ENCODE measurements at regions of chr6 and their contacts with region 1.

Region 1: GRCh38 chr6:132715204-132715603 is 1.3 kb upstream of the VNN1 start:
- DNase-seq: peak; percentile 84
- H3K4me3 Mint-ChIP-seq: no peak overlapping the region
- H3K27ac Mint-ChIP-seq: no peak overlapping the region
- H3K4me1 Mint-ChIP-seq: peaks cover 11% of the 10 kb centered on the region
- H3K27me3 Mint-ChIP-seq: no peaks in the 10 kb centered on the region
- CTCF ChIP-seq: peak; percentile 51

Region 2: DNA sequence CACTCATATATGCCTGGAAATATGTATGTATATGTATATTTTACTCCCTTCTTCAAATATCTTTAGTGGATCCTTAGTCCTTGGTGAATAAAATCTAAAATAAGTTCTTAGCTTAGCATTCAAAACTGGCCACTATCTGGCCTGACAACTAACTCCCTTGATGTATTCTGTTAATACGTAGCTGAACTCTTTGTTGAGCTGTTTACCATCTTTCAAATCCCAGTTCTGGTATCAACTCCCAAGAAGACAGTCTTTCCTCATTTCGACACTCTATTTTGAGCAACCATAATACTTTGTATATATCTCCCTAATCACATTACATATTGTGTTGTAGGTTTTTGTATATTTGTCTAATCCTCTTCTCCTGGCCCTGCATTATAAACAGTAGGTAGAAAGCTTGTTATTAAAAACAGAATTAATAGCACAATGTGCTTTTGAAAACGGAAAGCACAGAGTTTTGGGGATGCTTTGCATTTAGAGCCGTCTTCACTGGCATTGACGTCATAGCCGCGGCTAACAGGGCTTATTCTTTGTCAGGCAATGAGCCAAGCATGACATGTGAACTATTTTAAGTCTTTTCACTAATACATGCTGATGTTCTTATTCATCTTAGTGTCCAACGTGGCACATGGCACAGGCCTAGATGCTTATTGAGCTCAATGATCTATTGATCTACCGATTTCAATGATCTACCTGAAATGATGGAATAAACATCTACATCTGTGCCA is 716.8 kb before region 1 on chr6:
- CTCF ChIA-PET with region 1: no interaction called
- POLR2A ChIA-PET with region 1: no interaction called
- intact Hi-C with region 1: no loop called
- DNase-seq: no peak
- H3K4me3 Mint-ChIP-seq: no peak overlapping the region
- H3K27ac Mint-ChIP-seq: no peak overlapping the region
- H3K4me1 Mint-ChIP-seq: no peaks in the 10 kb centered on the region
- H3K27me3 Mint-ChIP-seq: no peaks in the 10 kb centered on the region
- CTCF ChIP-seq: no peak

Region 3: DNA sequence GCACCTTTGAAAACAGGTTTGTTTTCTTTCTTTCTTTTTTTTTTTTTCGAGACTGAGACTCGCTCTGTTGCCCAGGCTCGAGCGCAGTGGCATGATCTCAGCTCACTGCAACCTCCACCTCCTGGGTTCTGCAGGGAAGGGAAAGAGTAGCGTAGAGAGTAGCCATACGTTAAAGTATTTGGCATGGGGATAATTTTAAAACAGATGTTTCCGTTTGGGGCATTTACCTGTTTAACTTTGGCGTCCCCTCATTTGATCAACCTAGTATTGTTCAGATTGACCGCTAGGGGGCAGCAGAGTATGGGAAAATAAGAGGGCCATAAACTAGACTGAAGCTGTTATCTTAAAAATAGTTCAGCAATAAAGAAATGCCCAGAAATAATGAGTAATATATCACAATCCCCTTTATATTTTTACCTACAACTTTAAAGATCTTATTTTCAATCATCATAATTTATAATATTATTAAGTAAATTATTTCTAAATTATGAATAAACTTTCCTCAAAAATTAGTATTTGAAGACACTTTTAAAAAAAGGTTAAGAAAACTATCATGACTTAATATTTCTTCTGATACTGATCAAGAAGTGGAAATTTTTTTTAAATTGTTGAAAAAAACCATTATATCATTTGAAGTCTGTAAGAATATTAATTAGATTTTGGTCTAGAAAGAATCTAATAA is 184.8 kb before region 1 on chr6:
- CTCF ChIA-PET with region 1: interaction called, 11 read pairs
- POLR2A ChIA-PET with region 1: interaction called, 3 read pairs
- intact Hi-C with region 1: loop called (anchors 1 kb)
- DNase-seq: peak; percentile 78
- H3K4me3 Mint-ChIP-seq: no peak overlapping the region
- H3K27ac Mint-ChIP-seq: no peak overlapping the region
- H3K4me1 Mint-ChIP-seq: no peaks in the 10 kb centered on the region
- H3K27me3 Mint-ChIP-seq: no peaks in the 10 kb centered on the region
- CTCF ChIP-seq: peak; percentile 62

Region 4: DNA sequence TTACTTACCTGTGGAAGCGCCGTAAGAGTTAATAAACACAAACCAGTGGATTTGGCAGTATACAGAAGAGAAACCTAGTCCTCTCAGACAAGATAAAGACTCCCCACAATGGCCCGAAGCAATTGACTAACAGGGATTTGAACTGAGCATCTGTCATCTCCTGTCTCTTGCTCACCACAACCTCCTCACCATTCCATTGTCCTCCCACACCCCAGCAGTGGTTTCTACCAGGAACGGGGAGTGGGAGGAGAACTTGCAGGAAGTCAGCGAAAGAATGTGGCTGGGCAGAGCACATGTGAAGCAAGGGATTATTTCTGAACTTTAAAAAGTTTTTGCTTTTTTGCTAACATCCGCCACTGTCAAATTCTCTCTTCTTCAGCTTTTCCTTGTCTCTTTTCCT is 31.7 kb before region 1 on chr6:
- CTCF ChIA-PET with region 1: interaction called, 10 read pairs
- POLR2A ChIA-PET with region 1: no interaction called
- intact Hi-C with region 1: no loop called
- DNase-seq: peak; percentile 85
- H3K4me3 Mint-ChIP-seq: peak overlapping the region; percentile 66
- H3K27ac Mint-ChIP-seq: peak overlapping the region; percentile 95
- H3K4me1 Mint-ChIP-seq: peaks cover 28% of the 10 kb centered on the region
- H3K27me3 Mint-ChIP-seq: no peaks in the 10 kb centered on the region
- CTCF ChIP-seq: no peak

Region 5: GRCh38 chr6:132725471-132725870 is 10.3 kb after region 1 on chr6:
- CTCF ChIA-PET with region 1: interaction called, 15 read pairs
- POLR2A ChIA-PET with region 1: interaction called, 3 read pairs
- intact Hi-C with region 1: no loop called
- DNase-seq: no peak
- H3K4me3 Mint-ChIP-seq: no peak overlapping the region
- H3K27ac Mint-ChIP-seq: no peak overlapping the region
- H3K4me1 Mint-ChIP-seq: peaks cover 8% of the 10 kb centered on the region
- H3K27me3 Mint-ChIP-seq: no peaks in the 10 kb centered on the region
- CTCF ChIP-seq: no peak

Measured in MCF 10A (cell line).